RWPE1 (cell line): ENCODE measurements at regions of chr10 and their contacts with region 1.

Region 1: GRCh38 chr10:97572214-97572989 is at the start of gene ANKRD2:
- DNase-seq: peak; percentile 67
- H3K27ac ChIP-seq: peak within 1 kb of the TSS; percentile 99
- CTCF ChIP-seq: peak; percentile 71

Region 2: GRCh38 chr10:97450828-97451227 is 121.6 kb before region 1 on chr10:
- CTCF ChIA-PET with region 1: no interaction called
- POLR2A ChIA-PET with region 1: no interaction called
- DNase-seq: no peak
- H3K27ac ChIP-seq: peak overlapping the region; percentile 43
- CTCF ChIP-seq: no peak

Region 3: DNA sequence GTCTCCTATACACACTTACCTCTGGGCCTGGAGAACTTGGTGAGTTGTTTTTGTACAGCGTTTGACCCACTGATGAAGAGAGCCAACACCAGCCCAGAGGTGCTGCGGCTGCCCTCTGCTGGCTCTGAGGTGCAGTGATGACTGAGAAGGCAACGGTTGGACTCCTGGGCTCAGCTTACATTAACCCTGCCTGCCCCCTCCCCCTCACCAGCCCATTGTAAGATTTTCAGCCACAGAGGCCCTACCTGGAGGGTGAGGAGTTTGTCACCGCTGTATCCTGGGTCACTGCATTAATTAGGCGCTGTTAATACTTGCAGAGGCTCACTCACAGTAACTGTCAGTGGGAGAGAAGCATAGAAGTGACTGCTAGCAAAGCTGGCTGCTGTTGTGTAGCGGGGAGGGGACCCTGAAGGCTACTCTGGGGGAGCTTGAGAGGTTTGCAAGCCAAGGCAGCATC is 18.8 kb before region 1 on chr10:
- CTCF ChIA-PET with region 1: interaction called, 30 read pairs
- POLR2A ChIA-PET with region 1: no interaction called
- DNase-seq: peak; percentile 77
- H3K27ac ChIP-seq: peak overlapping the region; percentile 60
- CTCF ChIP-seq: peak; percentile 91

Region 4: DNA sequence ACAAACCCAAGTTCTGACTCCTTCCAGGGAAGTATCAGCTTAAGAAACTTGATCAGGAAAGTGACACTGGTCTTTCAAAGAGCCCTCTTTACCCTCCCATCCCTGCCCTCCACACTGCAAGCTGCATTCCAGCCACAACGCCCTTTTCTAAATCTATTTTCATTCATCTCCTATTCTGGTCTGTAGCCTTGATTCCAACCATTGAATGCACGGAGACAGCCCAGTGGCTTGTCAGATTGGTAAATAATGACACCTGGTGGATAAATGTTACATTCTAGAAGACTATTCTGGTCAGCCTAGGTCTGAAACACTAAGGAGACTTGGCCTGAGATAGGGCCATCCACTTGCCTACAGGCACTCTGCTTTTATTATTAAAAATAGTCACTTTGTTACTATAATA is 40.0 kb after region 1 on chr10:
- CTCF ChIA-PET with region 1: interaction called, 35 read pairs
- POLR2A ChIA-PET with region 1: interaction called, 3 read pairs
- DNase-seq: peak; percentile 87
- H3K27ac ChIP-seq: peak overlapping the region; percentile 48
- CTCF ChIP-seq: peak; percentile 57

Region 5: GRCh38 chr10:97743169-97743943 is 171.0 kb after region 1 on chr10:
- CTCF ChIA-PET with region 1: no interaction called
- POLR2A ChIA-PET with region 1: no interaction called
- DNase-seq: no peak
- H3K27ac ChIP-seq: peak overlapping the region; percentile 25
- CTCF ChIP-seq: no peak